RWPE1 (cell line): ENCODE measurements at regions of chr20 and their contacts with region 1.

Region 1: DNA sequence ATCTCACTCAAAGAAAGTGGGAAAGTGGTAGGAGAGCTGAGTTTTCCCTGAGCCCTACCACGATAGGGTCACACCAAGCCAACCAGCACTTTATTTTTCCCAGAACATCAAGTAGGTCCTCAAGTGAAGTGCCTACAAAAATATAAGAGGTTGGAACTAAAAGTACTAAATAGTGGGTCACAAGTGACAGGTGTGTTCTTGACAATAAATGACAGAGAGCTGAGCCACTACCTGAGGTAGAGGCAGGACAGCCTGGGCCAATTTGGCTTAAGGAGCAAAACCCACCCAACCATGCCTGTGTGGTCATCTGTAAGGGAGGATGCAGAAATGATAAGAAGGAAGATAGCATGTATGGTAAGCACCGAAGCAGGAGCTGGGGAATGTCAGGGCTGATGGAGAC is 154.8 kb upstream of the SSTR4 start:
- DNase-seq: no peak
- H3K27ac ChIP-seq: no peak overlapping the region
- CTCF ChIP-seq: no peak

Region 2: DNA sequence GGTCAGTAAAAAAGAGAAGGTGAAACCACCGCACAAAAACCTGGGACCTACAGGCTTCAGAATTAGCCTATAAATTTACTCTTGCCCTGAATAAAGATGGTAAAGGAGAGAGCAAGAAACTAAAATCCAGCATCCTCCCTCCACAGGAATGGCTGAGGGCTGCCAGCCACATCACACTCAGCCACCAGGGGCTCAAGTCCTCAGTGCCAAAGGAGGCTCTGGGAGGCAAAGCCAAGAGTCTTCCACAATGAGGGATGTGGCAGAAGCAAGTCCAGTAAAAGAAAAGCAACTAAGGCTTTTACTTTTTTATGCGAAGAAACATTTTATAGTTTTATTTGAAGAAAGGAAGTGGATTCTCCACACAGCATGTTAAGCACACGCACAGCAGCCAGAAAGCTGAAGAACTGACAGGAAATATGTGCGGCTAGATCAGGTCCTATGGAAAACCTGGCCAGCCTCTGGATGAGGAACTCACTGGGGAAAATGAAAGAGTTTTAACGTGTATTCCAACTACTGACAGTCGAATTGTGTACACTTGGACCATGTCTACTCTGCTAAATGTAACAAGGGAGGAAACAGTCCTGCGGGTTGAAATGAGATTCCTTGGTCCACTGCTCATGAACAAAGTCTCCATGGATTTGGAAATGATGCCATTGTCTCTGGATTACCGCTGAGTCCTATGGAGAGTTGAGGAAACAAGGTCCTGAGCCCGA is 64.5 kb before region 1 on chr20:
- CTCF ChIA-PET with region 1: no interaction called
- POLR2A ChIA-PET with region 1: no interaction called
- DNase-seq: no peak
- H3K27ac ChIP-seq: no peak overlapping the region
- CTCF ChIP-seq: no peak

Region 3: GRCh38 chr20:22910287-22910852 is 30.1 kb after region 1 on chr20:
- CTCF ChIA-PET with region 1: interaction called, 11 read pairs
- POLR2A ChIA-PET with region 1: no interaction called
- DNase-seq: no peak
- H3K27ac ChIP-seq: no peak overlapping the region
- CTCF ChIP-seq: no peak